Sigmoid colon (tissue), 7 donors: ENCODE measurements at regions of chr16 and their contacts with region 1.

Region 1: GRCh38 chr16:56600398-56600999 is 7.9 kb upstream of the MT2A start:
- DNase-seq: no peak
- H3K4me3 ChIP-seq: no peak overlapping the region
- H3K27ac ChIP-seq: no peak overlapping the region
- H3K4me1 ChIP-seq: peaks cover 0 to 1% (median 0%) of the 10 kb centered on the region in 4 donors
- H3K27me3 ChIP-seq: no peaks in the 10 kb centered on the region
- CTCF ChIP-seq: peak in 3 of 4 experiments; percentile 54 to 60 (median 54)
- EP300 ChIP-seq: no peak
- POLR2A ChIP-seq: no peak

Region 2: GRCh38 chr16:56360117-56361008 is 240.1 kb before region 1 on chr16:
- intact Hi-C with region 1: no loop called
- DNase-seq: peak; percentile 53
- H3K4me3 ChIP-seq: no peak overlapping the region
- H3K27ac ChIP-seq: peak overlapping the region in 1 of 4 donors; percentile 15
- H3K4me1 ChIP-seq: peaks cover 0 to 21% (median 15%) of the 10 kb centered on the region in 4 donors
- H3K27me3 ChIP-seq: no peaks in the 10 kb centered on the region
- CTCF ChIP-seq: no peak
- EP300 ChIP-seq: no peak
- POLR2A ChIP-seq: no peak

Region 3: DNA sequence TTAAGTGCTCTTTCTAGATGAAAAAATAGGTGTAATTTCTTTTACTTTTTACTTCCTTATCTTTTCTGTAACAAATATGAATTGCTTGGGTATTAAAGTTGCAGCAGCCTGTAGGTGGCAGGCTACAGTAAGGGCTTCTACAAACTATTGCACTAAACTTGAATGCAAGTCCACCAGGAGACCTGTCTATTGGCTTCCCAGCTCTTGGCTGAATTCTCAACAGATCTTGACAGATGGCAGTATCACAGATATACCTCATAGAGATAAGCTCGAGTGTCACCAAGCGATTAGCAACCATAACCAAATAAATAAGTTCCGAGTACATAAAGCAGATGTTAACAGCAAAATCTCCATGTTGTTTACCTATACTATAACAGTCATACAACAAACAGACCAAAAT is 86.5 kb before region 1 on chr16:
- intact Hi-C with region 1: loop called (anchors 2 kb)
- DNase-seq: no peak
- H3K4me3 ChIP-seq: no peak overlapping the region
- H3K27ac ChIP-seq: no peak overlapping the region
- H3K4me1 ChIP-seq: peaks cover 0 to 39% (median 16%) of the 10 kb centered on the region in 4 donors
- H3K27me3 ChIP-seq: no peaks in the 10 kb centered on the region
- CTCF ChIP-seq: peak in 3 of 4 experiments; percentile 41 to 63 (median 50)
- EP300 ChIP-seq: no peak
- POLR2A ChIP-seq: no peak

Region 4: DNA sequence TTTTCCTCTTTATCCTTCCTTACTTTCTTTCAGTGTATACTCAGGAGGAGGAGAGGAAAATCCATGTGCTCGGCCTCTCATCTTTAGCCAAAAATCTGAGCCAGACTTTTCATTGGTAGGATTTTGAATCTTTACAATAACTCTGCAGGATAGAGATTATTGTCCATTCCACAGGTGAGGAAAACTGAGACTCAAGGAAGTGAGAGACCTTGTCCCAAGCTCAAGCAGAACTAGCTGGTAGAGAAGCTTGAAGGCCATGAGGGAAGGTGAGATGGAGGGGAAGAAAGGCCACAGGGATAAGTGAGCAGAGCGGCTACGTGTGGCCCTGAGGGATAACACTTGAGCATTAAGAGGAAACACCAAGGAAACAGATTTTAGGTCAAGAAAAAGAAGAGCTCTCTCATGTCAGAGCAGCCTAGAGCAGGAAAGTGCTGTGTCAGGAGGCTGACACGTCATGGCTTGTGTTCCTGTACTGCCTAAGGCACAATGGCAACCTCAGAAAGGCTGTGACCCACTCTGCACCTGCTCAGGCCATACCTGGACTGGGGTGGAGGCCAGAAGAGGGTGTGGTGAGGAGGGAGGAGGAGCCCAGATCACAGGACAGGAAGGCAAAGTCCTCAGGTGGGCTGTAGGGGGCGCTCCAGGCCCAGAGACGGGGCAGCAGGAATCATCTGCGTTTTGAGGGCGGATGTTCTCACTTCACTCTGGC is 23.8 kb before region 1 on chr16:
- intact Hi-C with region 1: no loop called
- DNase-seq: peak; percentile 86
- H3K4me3 ChIP-seq: no peak overlapping the region
- H3K27ac ChIP-seq: no peak overlapping the region
- H3K4me1 ChIP-seq: no peaks in the 10 kb centered on the region
- H3K27me3 ChIP-seq: no peaks in the 10 kb centered on the region
- CTCF ChIP-seq: peak; percentile 62 to 75 (median 70)
- EP300 ChIP-seq: no peak
- POLR2A ChIP-seq: no peak